GM12878 (cell line): ENCODE measurements at regions of chr2 and their contacts with region 1.

Region 1: GRCh38 chr2:71299507-71299906 is 32.1 kb upstream of the ZNF638 start:
- DNase-seq: no peak
- ATAC-seq: peak; percentile 54
- H3K4me3 ChIP-seq: no peak overlapping the region
- H3K27ac ChIP-seq: no peak overlapping the region
- H3K4me1 ChIP-seq: no peaks in the 10 kb centered on the region
- H3K27me3 ChIP-seq: no peaks in the 10 kb centered on the region
- CTCF ChIP-seq: peak; percentile 65 to 68 (median 67); a peak in 5 of 6 replicates
- EP300 ChIP-seq: no peak
- POLR2A ChIP-seq: no peak
- RAD21 ChIP-seq: peak; percentile 72

Region 2: GRCh38 chr2:71166812-71167211 is 132.7 kb before region 1 on chr2:
- CTCF ChIA-PET with region 1: no interaction called
- POLR2A ChIA-PET with region 1: no interaction called
- RAD21 ChIA-PET with region 1: no interaction called
- SMC1A ChIA-PET with region 1: no interaction called
- in situ Hi-C with region 1: no loop called
- intact Hi-C with region 1: no loop called
- DNase-seq: no peak
- ATAC-seq: no peak
- H3K4me3 ChIP-seq: no peak overlapping the region
- H3K27ac ChIP-seq: no peak overlapping the region
- H3K4me1 ChIP-seq: no peaks in the 10 kb centered on the region
- H3K27me3 ChIP-seq: no peaks in the 10 kb centered on the region
- CTCF ChIP-seq: no peak
- EP300 ChIP-seq: no peak
- POLR2A ChIP-seq: no peak
- RAD21 ChIP-seq: no peak

Region 3: GRCh38 chr2:71379088-71379487 is 79.6 kb after region 1 on chr2:
- CTCF ChIA-PET with region 1: interaction called, 11 read pairs
- POLR2A ChIA-PET with region 1: no interaction called
- RAD21 ChIA-PET with region 1: no interaction called
- SMC1A ChIA-PET with region 1: no interaction called
- in situ Hi-C with region 1: no loop called
- intact Hi-C with region 1: no loop called
- DNase-seq: no peak
- ATAC-seq: peak; percentile 56
- H3K4me3 ChIP-seq: no peak overlapping the region
- H3K27ac ChIP-seq: no peak overlapping the region
- H3K4me1 ChIP-seq: peaks cover 7% of the 10 kb centered on the region
- H3K27me3 ChIP-seq: no peaks in the 10 kb centered on the region
- CTCF ChIP-seq: no peak
- EP300 ChIP-seq: no peak
- POLR2A ChIP-seq: no peak
- RAD21 ChIP-seq: no peak

Region 4: GRCh38 chr2:71505086-71505769 is 205.7 kb after region 1 on chr2:
- CTCF ChIA-PET with region 1: interaction called, 242 read pairs
- POLR2A ChIA-PET with region 1: interaction called, 9 read pairs
- RAD21 ChIA-PET with region 1: interaction called, 158 read pairs
- SMC1A ChIA-PET with region 1: interaction called, 74 read pairs
- in situ Hi-C with region 1: loop called (anchors 5 kb)
- intact Hi-C with region 1: loop called (anchors 1 kb)
- DNase-seq: no peak
- ATAC-seq: no peak
- H3K4me3 ChIP-seq: no peak overlapping the region
- H3K27ac ChIP-seq: no peak overlapping the region
- H3K4me1 ChIP-seq: no peaks in the 10 kb centered on the region
- H3K27me3 ChIP-seq: no peaks in the 10 kb centered on the region
- CTCF ChIP-seq: no peak
- EP300 ChIP-seq: no peak
- POLR2A ChIP-seq: no peak
- RAD21 ChIP-seq: no peak

Region 5: DNA sequence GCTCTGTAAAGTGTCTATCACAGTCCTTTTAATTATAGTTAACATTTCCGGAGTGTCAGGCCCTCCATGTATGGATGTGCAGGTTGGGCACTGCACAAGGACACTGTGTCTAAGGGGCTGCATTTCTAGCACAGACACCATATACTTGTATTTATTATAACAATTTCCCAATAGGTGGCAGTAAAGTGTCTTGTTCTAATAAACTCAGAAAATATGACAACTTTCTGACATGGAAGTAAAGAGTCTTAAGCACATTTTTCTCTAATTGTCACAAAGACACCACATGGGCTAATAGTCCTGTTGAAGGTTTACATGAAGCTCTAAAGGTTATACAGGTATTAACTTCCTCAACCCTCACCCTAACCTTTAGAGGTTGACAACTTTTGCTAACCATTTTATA is 310.5 kb after region 1 on chr2:
- CTCF ChIA-PET with region 1: no interaction called
- POLR2A ChIA-PET with region 1: no interaction called
- RAD21 ChIA-PET with region 1: no interaction called
- SMC1A ChIA-PET with region 1: no interaction called
- in situ Hi-C with region 1: no loop called
- intact Hi-C with region 1: no loop called
- DNase-seq: no peak
- ATAC-seq: peak; percentile 61; the same call in 2 of the 3 replicates
- H3K4me3 ChIP-seq: no peak overlapping the region
- H3K27ac ChIP-seq: no peak overlapping the region
- H3K4me1 ChIP-seq: no peaks in the 10 kb centered on the region
- H3K27me3 ChIP-seq: peaks cover 0 to 2% of the 10 kb centered on the region in 2 experiments; a peak in 1 of 4 replicates
- CTCF ChIP-seq: peak in 1 of 3 experiments; percentile 22; a peak in 2 of 6 replicates
- EP300 ChIP-seq: no peak
- POLR2A ChIP-seq: no peak
- RAD21 ChIP-seq: 0 out of 2 replicates have a peak, but pooled peaks have one; percentile 11

Region 6: GRCh38 chr2:72545790-72546189 is 1246.3 kb after region 1 on chr2:
- CTCF ChIA-PET with region 1: no interaction called
- POLR2A ChIA-PET with region 1: no interaction called
- RAD21 ChIA-PET with region 1: no interaction called
- SMC1A ChIA-PET with region 1: no interaction called
- in situ Hi-C with region 1: no loop called
- intact Hi-C with region 1: no loop called
- DNase-seq: no peak
- ATAC-seq: no peak
- H3K4me3 ChIP-seq: no peak overlapping the region
- H3K27ac ChIP-seq: no peak overlapping the region
- H3K4me1 ChIP-seq: no peaks in the 10 kb centered on the region
- H3K27me3 ChIP-seq: no peaks in the 10 kb centered on the region
- CTCF ChIP-seq: no peak
- EP300 ChIP-seq: no peak
- POLR2A ChIP-seq: no peak
- RAD21 ChIP-seq: no peak